ENCODE measurements at regions of chr19 and their contacts with region 1.

Region 1: DNA sequence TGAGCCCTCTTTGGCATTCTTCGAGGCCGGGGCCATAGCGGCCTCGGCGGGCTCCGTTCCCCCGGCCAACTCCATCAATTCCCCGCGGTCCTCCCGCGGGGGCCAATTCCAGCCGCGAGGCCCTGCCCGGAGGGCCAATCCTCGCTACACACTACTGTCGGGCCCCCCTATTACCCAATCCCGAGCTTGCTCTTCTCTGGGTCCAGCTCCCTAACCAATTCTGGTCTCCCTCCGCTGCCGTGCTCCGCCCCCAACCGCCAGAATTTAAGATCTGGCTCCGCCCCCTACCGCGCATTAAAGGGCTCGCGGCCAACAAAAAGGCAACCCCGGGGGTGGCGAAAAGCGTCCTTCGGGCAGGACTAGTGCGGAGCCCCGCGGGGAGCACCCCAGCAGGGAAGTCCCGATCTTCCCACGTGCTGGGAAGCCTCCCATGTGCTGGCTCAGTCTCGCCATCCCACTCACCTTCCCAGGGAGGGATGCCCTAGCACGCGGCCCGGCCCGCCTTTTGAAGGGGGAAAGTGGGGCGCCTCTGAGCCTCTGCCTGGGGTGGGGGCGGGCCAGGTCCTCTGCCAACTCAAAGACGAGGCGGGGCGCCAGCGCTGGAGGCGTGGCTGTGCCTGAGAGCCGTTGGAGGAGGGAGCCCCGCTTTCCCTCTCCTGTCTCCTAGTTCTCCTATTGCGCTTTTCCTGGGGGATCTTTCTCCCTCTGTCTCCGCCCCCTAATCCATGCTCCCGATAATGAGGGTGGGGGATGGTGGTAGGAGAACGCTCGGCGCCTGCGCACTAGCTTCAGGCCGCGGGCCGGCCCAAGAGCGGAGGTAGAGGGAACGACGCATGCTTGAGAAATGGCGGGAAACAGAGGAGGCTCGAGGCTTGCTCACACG is 3.5 kb downstream of the LIPE start:
- DNase-seq: peak; percentile 91
- ATAC-seq: peak; percentile 90
- H3K4me3 Mint-ChIP-seq: peak overlapping the region; percentile 98
- H3K27ac Mint-ChIP-seq: peak overlapping the region; percentile 98
- H3K4me1 Mint-ChIP-seq: peaks cover 46% of the 10 kb centered on the region
- H3K27me3 Mint-ChIP-seq: no peaks in the 10 kb centered on the region
- CTCF ChIP-seq: no peak

Region 2: GRCh38 chr19:41928221-41928683 is 495.5 kb before region 1 on chr19 and contains the start of gene ERFL:
- CTCF ChIA-PET with region 1: no interaction called
- POLR2A ChIA-PET with region 1: no interaction called
- intact Hi-C with region 1: no loop called
- DNase-seq: no peak
- ATAC-seq: peak; percentile 35
- H3K4me3 Mint-ChIP-seq: no peak within 1 kb of the TSS
- H3K27ac Mint-ChIP-seq: peak within 1 kb of the TSS; percentile 73
- H3K4me1 Mint-ChIP-seq: peaks cover 35% of the 10 kb centered on the region
- H3K27me3 Mint-ChIP-seq: peaks cover 2% of the 10 kb centered on the region
- CTCF ChIP-seq: no peak
- total RNA-seq, gene ERFL: 0.64 and 1.1 TPM in 2 replicates

Region 3: DNA sequence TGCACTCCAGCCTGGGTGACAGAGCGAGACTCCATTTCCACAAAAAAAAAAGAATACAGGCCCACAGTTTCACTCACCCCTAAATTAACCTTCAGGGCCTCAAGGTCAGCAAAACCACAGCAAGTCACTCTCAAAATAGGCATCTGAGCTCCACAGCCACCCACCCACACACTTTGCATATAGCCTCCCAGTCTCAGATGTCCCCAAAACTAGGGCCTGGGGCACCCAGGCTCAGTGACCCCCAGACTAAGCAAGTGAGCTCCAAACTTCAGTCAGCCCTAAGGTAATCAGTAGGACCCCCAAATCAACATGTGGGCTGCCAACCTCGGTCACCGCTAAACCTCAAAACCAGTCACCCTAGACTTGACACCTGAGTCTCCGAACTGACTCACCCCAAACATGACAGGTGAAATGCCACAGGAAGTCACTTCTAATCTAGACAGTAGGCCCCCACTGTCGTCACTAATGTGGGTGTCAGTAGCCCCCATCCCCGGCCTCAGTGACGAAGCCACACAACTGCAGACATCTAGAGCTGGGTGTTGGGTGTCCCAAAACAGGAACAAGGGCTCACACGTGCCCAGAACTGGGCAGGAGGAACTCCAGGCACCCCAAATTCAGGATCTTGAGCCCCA is 478.5 kb before region 1 on chr19:
- CTCF ChIA-PET with region 1: no interaction called
- POLR2A ChIA-PET with region 1: no interaction called
- intact Hi-C with region 1: loop called (anchors 1 kb)
- DNase-seq: peak; percentile 67
- ATAC-seq: peak; percentile 82
- H3K4me3 Mint-ChIP-seq: peak overlapping the region; percentile 72
- H3K27ac Mint-ChIP-seq: peak overlapping the region; percentile 98
- H3K4me1 Mint-ChIP-seq: peaks cover 73% of the 10 kb centered on the region
- H3K27me3 Mint-ChIP-seq: no peaks in the 10 kb centered on the region
- CTCF ChIP-seq: no peak

Region 4: DNA sequence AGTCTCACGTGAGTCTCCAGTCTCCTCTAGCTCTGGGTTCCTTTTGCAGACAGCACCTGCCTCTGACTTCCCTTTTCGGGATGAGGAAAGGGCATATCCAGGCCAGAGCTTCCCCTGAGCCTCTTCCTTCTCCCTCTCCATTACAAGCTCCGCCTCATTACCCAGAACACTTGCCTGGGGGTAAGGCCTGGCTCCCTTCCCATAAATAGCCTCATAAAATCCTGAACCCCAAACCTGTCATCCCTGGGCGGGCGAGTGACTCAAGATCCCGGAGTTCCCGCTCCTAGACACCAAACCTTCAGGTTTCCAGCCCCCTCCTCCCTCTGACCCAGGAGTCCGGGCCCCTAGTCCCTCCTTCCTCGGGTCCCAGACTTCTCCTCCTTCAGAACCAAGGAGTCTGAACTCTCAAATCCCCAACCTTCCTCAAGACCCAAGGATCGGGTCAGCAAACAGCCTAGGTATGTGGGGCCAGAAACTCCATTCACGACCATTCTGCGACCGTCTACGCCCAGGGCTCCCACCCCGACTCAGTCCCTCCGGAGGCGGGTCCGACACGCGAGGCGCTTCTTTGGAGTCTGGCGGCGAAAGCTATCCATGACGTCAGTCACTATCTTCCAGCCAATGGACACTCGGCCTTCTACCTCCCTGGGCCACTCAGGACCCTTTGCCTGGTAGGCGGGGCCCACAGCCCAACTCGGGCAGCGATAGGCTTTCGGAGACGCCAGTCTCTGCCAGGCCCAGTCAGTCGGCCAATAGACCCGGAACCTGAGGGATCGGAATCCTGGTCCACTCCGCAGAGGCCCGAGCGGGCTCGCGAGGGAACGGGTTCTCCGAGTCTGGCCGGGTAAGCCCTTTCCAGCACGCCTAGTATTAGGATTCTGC is 27.1 kb before region 1 on chr19:
- CTCF ChIA-PET with region 1: interaction called, 4 read pairs
- POLR2A ChIA-PET with region 1: interaction called, 23 read pairs
- intact Hi-C with region 1: loop called (anchors 1 kb)
- DNase-seq: peak; percentile 96
- ATAC-seq: peak; percentile 96
- H3K4me3 Mint-ChIP-seq: peak overlapping the region; percentile 95
- H3K27ac Mint-ChIP-seq: peak overlapping the region; percentile 89
- H3K4me1 Mint-ChIP-seq: peaks cover 45% of the 10 kb centered on the region
- H3K27me3 Mint-ChIP-seq: peaks cover 5% of the 10 kb centered on the region
- CTCF ChIP-seq: no peak

Region 5: GRCh38 chr19:42440357-42441048 is 16.8 kb after region 1 on chr19:
- CTCF ChIA-PET with region 1: interaction called, 24 read pairs
- POLR2A ChIA-PET with region 1: interaction called, 6 read pairs
- intact Hi-C with region 1: loop called (anchors 1 kb)
- DNase-seq: peak; percentile 68
- ATAC-seq: peak; percentile 60
- H3K4me3 Mint-ChIP-seq: no peak overlapping the region
- H3K27ac Mint-ChIP-seq: no peak overlapping the region
- H3K4me1 Mint-ChIP-seq: peaks cover 10% of the 10 kb centered on the region
- H3K27me3 Mint-ChIP-seq: peaks cover 3% of the 10 kb centered on the region
- CTCF ChIP-seq: peak; percentile 56

Measured in activated B cell treated with CpG ODN at 0.5 μM for 24 hours (primary cell).